Left cardiac atrium (tissue), 4 donors: ENCODE measurements at regions of chr7 and their contacts with region 1.

Region 1: DNA sequence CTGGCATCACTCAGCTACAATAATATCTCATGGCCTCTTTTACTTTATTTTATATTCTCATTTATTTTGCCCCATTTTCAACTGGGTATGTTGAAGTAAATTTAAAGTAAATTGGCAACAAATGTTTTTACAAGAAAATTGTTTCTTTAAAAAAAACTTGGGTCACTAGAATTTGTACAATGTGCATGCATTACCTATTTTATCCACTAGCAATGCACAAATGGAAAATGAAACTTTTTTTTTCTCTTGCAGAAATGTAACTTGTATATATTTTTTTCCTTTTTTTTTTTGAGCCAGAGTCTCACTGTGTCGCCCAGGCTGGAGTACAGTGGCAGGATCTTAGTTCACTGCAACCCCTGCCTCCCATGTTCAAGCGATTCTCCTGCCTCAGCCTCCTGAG is 10.3 kb upstream of the H2AZ2 start:
- DNase-seq: no peak
- ATAC-seq: no peak

Region 2: DNA sequence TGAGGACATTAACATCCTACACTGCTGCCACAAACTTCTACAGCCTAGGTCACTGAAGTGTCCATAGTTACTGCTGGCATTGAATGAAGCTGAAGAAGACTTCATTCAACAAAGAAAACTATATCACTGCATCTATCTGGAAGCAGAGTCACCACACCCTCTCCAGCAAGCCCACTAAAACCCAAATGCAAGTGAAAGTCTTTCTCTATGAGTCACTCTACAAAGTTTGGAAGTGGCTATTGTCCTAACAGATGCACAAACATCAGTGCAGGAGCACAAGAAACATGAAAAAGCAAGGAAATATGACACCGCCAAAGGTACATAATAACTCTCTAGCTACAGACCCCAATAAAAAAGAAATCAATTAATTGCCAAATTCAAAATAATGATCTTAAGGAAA is 489.3 kb before region 1 on chr7:
- intact Hi-C with region 1: no loop called
- DNase-seq: no peak
- ATAC-seq: no peak

Region 3: GRCh38 chr7:44885394-44886317 is 27.5 kb after region 1 on chr7 and contains the start of gene PURB:
- intact Hi-C with region 1: loop called in 1 of 2 experiments (anchors 5 kb)
- DNase-seq: peak; percentile 96
- ATAC-seq: peak; percentile 97
- total RNA-seq, gene PURB: 13.8 to 19.3 TPM

Region 4: DNA sequence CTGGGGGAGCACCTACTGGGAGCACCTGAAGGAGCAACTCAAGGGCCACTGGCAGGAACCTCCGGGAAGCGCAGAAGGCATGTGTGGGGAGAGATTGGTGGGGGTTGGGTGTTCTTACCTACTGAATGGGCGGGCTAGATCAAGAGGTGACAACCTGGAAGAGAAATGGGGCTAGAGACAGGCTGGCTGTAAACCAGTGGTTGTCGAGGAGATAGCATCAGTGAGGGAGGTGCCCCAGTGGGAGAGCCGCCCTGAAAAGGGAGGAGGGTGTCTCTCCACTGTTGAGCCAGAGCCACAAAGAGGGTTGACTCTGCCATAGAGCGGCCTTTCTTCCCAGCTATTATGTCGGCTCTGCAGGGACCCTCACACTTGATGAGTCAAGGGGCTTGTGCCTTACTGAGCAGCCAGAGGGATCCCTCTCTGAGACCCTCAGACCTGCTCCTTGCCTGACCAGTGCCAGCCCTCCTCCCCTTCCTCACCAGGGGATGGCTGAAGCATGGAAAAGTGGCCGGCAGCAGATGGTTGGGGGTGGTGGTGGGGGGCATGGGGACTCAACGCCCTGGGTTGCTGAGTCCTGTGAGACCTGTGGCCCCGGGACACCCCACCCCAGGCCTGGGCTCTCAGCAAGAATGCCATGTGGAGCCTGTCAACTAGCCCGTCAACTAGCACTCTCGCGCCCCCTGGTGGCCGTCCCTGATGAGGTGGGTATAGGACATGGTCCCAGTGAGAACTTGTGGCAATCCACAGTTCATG is 63.6 kb after region 1 on chr7:
- intact Hi-C with region 1: loop called in 1 of 2 experiments (anchors 1 kb)
- DNase-seq: peak; percentile 93
- ATAC-seq: peak; percentile 98

Region 5: GRCh38 chr7:45136106-45137060 is 278.2 kb after region 1 on chr7:
- intact Hi-C with region 1: loop called in 1 of 2 experiments (anchors 5 kb)
- DNase-seq: peak; percentile 50
- ATAC-seq: peak; percentile 75 to 80